GM18951 (cell line): ENCODE measurements at regions of chr12 and their contacts with region 1.

Region 1: DNA sequence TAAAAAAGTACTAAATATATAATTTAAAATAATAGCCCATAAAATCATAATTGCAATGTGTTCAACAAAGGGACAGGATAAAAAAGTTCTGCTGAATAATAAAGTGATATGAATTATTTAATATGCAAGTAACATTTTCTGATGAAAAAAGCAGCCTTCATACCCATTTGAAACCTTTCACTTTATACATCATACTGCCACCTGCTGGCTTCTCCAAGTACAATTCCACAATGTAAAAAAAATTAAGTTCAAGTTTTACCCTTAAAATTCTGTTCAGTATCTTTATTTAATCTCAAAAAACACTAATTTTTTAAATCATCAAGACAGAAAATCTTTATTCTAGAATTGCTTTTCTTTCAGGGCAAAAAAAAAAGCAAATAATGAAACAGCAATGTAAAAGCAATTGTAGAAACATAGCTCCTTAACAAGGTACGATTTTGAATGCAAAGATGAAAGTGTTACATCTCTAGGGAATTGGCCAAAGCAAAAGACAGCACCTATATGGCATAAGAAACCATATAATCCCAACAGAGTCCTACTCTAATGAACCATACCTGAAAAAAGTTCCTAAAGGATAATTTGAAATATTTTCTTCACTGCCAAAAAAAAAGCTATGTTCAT is 15.0 kb downstream of the MDM1 start:
- POLR2A ChIP-seq: no peak

Region 2: GRCh38 chr12:67327466-67327865 is 989.7 kb before region 1 on chr12:
- in situ Hi-C with region 1: loop called (anchors 25 kb)
- POLR2A ChIP-seq: no peak

Region 3: GRCh38 chr12:68040450-68041075 is 276.6 kb before region 1 on chr12:
- in situ Hi-C with region 1: loop called (anchors 25 kb)
- POLR2A ChIP-seq: no peak

Region 4: DNA sequence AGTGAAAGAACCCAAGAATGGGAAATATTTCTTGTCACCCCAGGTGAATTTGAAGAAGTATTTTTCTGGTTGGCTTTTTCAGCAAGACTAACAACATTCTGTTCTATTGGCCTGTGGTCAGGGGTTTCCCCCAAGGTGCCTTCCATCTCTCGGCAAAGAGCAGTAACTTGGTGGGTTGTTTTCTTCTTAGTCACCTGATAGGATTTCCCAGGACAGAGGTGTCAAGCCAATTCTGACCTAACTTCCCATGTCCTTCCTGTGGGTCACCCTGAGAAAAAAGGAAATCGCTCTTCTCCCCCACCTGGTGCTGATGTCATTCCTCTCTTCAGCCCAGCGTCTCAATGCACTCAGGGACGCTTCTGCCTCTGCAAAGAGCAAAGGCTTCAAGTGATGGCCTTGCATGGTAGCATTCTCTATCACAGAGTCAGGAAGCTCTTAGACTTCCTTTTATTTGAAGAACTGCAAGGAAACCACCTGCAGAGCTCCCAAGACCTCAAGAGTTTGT is 141.5 kb before region 1 on chr12:
- in situ Hi-C with region 1: no loop called
- POLR2A ChIP-seq: no peak